Sigmoid colon (tissue), 7 donors: ENCODE measurements at regions of chr9 and their contacts with region 1.

Region 1: GRCh38 chr9:33374634-33375213 is 27.6 kb downstream of the AQP7 start:
- DNase-seq: peak; percentile 86
- H3K4me3 ChIP-seq: peak overlapping the region in 2 of 4 donors; percentile 18 to 30
- H3K27ac ChIP-seq: peak overlapping the region; percentile 40 to 69 (median 54)
- H3K4me1 ChIP-seq: peaks cover 0 to 9% (median 6%) of the 10 kb centered on the region in 4 donors
- H3K27me3 ChIP-seq: no peaks in the 10 kb centered on the region
- CTCF ChIP-seq: peak; percentile 56 to 88 (median 81)
- EP300 ChIP-seq: no peak
- POLR2A ChIP-seq: no peak

Region 2: DNA sequence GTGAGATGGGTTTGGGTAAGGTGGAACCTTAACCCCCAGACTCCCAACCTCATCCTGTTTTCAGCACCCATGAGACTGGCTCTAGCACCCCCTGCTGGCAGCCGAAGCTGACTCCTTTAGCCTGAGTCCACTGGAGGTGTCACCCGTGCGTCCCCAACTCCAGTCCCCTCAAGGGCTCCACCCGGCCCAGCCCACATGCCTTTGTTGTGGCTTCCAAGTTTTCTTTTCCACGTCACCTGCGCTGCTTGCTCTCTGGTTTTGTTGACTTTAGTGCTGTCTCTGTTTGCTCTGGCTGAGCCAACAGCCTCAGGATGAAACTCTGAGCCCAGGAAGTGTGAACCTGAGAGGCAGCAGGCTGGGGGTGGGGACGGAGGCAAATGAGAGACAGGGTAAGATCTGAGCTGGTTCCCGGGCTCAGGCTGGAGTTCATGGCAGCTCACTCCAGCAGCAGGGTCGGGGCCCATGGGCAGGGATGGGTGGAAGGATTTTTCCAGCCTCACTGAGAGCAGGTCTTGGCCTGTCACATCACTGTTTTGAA is 40.8 kb after region 1 on chr9:
- intact Hi-C with region 1: loop called (anchors 1 kb)
- DNase-seq: peak; percentile 75
- H3K4me3 ChIP-seq: no peak overlapping the region
- H3K27ac ChIP-seq: no peak overlapping the region
- H3K4me1 ChIP-seq: peaks cover 0 to 7% (median 4%) of the 10 kb centered on the region in 4 donors
- H3K27me3 ChIP-seq: no peaks in the 10 kb centered on the region
- CTCF ChIP-seq: peak; percentile 46 to 76 (median 69)
- EP300 ChIP-seq: no peak
- POLR2A ChIP-seq: no peak

Region 3: DNA sequence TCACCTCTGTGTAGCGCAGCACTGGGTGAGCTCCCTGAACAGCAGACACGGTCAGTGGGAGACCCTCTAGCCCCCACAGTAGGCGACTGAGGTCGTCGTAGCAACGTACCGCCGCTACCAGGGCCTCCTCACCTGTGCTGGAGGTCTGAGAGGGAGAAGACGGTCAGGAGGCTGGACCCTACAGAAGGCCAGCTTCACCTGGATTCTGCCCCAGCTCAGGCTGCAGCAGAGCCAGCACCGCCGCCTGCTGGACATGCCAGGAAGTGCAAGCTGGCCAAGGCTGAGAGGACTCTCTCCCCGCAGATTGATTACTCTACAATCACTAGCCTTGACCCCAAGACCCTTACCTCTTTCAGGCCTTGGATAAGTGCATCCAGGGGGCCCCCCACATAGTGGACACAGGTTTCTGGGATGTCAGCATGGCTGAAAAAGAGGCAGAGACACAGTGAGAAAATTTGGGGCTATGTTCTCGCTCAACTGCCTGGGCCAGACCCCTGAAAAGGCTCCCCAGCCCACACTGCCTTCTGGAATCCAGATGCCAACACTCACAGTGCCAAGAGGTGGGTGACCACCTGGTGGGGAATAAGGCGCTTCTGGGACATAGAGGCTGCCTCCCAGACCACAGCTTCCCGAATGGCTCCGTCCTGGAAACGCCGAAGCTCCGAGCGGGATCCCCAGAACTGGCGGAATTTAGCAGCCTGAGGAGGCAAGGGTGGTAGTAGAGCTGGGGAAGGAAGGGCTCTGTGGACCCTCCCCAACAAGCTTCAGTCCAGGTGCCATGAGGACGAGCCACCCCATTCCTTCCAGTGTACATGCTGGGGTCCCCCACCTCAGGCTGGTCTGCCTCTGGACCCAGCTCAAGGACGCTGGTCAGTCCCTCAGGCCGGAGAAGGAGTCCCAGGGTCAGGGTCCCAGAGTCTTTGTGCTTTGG is 92.1 kb after region 1 on chr9:
- intact Hi-C with region 1: loop called (anchors 1 kb)
- DNase-seq: peak; percentile 76
- H3K4me3 ChIP-seq: no peak overlapping the region
- H3K27ac ChIP-seq: no peak overlapping the region
- H3K4me1 ChIP-seq: peaks cover 0 to 3% (median 1%) of the 10 kb centered on the region in 4 donors
- H3K27me3 ChIP-seq: no peaks in the 10 kb centered on the region
- CTCF ChIP-seq: peak; percentile 83 to 94 (median 88)
- EP300 ChIP-seq: no peak
- POLR2A ChIP-seq: no peak

Region 4: DNA sequence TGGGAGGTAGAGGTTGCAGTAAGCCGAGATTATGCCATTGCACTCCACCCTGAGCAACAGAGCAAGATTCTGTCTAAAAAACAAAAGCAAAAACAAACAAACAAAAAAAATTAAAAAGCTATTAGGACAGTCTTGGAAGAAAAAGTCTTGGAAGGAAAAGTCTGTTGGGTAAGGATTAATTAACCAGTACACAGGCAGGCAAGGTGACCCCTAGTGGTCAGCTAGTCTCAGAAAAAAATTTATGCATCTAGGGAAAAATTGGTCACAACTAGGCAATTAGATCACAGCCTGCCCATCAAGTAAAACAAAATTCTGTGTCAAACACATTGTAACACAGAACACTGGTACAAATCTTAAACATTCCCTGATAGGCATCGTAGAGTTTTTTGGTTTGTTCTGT is 142.6 kb after region 1 on chr9:
- intact Hi-C with region 1: loop called (anchors 5 kb)
- DNase-seq: no peak
- H3K4me3 ChIP-seq: no peak overlapping the region
- H3K27ac ChIP-seq: no peak overlapping the region
- H3K4me1 ChIP-seq: no peaks in the 10 kb centered on the region
- H3K27me3 ChIP-seq: peaks cover 0 to 10% (median 0%) of the 10 kb centered on the region in 3 donors
- CTCF ChIP-seq: peak in 3 of 4 experiments; percentile 23 to 52 (median 36)
- EP300 ChIP-seq: no peak
- POLR2A ChIP-seq: no peak

Region 5: GRCh38 chr9:33721674-33722358 is 347.1 kb after region 1 on chr9:
- intact Hi-C with region 1: loop called (anchors 10 kb)
- DNase-seq: peak; percentile 90
- H3K4me3 ChIP-seq: no peak overlapping the region
- H3K27ac ChIP-seq: no peak overlapping the region
- H3K4me1 ChIP-seq: peaks cover 0 to 4% (median 2%) of the 10 kb centered on the region in 4 donors
- H3K27me3 ChIP-seq: peaks cover 0 to 11% (median 0%) of the 10 kb centered on the region in 3 donors
- CTCF ChIP-seq: peak; percentile 100
- EP300 ChIP-seq: no peak
- POLR2A ChIP-seq: no peak